ENCODE measurements at regions of chr1 and their contacts with region 1.

Region 1: DNA sequence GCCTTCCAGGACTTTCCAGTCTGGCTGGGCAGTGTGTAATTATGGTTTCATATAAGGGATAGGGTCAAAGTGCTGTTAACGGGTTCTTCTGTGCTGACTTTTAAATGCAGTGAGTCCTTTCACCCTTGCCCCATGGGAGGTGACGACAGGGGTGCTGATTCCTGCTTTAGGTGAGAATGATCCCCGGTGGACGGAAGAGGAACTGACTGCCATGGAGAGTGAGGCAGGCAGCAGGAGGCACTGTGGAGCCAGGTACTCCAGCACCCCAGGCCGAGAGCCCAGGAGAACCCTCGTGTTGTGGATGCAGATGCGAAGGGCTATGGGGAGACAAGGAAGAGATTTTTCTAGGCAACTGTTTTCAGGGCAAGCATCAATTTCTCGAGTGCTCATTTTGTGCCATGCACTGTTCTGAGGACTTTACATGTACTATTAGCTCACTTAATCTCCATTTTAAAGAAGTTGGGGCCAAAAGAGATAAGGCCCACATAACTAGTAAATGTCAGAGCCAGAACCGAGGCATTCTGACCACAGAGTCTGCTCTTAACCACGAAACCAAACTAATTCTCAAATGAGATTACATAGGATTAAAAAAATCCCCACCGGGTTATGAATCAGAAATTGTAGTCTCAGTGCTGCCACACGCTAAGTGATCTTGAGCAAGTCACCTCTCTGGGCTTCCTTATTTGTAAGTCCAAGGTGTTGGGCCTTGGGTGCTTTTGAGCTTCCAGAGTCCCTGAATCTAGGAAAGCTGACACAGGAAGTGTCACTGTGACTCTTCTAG is 28.2 kb downstream of the STPG1 start:
- DNase-seq: no peak
- ATAC-seq: no peak
- H3K4me3 ChIP-seq: no peak overlapping the region
- H3K27ac ChIP-seq: peak overlapping the region in 1 of 12 donors; percentile 69
- H3K4me1 ChIP-seq: peaks cover 0 to 18% (median 0%) of the 10 kb centered on the region in 12 donors
- H3K27me3 ChIP-seq: no peaks in the 10 kb centered on the region
- CTCF ChIP-seq: peak in 3 of 12 donors; percentile 10 to 19 (median 10)
- POLR2A ChIP-seq: no peak

Region 2: DNA sequence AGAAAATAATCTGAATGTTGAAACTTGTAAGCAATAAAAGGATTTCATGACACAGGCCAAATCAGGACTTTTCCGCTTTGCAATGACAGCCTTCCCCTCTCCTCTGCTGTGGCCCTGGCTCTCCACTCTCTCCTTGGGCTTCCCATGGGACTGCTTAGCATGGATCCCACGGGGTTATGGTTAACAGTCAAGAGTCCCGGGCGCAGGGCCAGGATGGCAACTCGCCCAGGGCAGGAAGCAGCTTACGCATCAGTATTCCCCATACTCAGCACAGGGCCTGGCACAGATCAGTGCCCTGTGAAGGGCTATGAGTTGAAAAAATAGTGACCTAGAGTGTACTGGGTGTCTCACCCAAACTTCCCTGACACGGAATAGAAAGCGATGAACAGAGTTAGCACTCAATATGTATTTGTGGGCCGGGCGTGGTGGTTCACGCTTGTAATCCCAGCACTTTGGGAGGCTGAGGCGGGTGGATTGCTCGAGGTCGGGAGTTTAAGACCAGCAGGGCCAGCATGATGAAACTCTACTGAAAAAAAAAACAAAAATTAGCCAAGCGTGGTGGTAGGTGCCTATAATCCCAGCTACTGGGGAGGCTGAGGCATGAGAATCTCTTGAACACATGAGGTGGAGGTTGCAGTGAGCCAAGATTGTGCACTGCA is 95.3 kb before region 1 on chr1:
- intact Hi-C with region 1: loop called in 1 of 10 experiments (anchors 10 kb)
- DNase-seq: peak; percentile 83 to 93 (median 90)
- ATAC-seq: peak; percentile 95 to 99 (median 98)
- H3K4me3 ChIP-seq: no peak overlapping the region
- H3K27ac ChIP-seq: peak overlapping the region in 3 of 12 donors; percentile 16 to 55 (median 24)
- H3K4me1 ChIP-seq: peaks cover 0 to 28% (median 4%) of the 10 kb centered on the region in 12 donors
- H3K27me3 ChIP-seq: peaks cover 0 to 6% (median 0%) of the 10 kb centered on the region in 9 donors
- CTCF ChIP-seq: no peak
- POLR2A ChIP-seq: no peak

Region 3: GRCh38 chr1:24329797-24330543 is 55.4 kb before region 1 on chr1:
- intact Hi-C with region 1: loop called in 1 of 10 experiments (anchors 5 kb)
- DNase-seq: no peak
- ATAC-seq: no peak
- H3K4me3 ChIP-seq: no peak overlapping the region
- H3K27ac ChIP-seq: no peak overlapping the region
- H3K4me1 ChIP-seq: no peaks in the 10 kb centered on the region
- H3K27me3 ChIP-seq: no peaks in the 10 kb centered on the region
- CTCF ChIP-seq: no peak
- POLR2A ChIP-seq: no peak

Measured in heart left ventricle (tissue), 16 donors.